ENCODE measurements at regions of chr11 and their contacts with region 1.

Region 1: DNA sequence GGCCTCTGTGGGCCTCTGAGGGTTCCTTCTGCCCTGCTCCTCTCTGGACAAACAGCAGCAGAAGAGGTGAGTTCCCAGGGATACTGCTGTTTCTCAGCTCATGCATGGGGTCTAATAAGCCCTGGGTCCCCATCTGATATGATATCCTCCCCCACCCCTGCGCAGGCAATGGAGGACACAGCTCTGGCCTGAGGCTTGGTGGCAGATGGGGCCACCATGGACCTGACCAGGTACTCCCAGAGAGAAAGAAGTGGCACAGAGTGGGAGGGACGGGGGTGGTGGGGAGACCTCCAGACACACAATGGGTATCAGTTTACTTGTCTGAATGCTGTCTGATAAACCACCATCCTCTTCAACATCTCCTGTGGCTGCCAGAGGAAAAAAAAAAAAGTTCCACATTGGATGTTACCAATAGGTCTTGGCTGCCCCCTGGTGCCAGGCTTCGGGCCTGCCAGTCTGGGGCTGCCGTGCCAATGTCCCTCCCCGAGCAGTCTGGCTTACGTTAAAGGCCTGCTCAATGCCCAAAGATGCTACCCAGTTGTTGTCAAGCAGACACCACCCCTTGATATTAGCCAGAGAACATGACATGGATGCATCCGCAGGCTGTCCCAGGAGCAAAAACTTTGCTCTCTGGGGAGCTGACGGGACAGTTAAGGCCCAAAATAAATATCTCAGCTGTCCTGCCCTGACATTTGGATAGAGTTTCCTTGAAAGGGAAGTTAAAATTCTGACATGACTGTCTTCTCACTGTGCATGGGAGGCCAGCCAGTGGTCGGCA is 27.9 kb upstream of the ABCC8 start:
- DNase-seq: peak; percentile 65 to 83
- ATAC-seq: peak; percentile 77 to 91
- H3K4me3 ChIP-seq: no peak overlapping the region
- H3K27ac ChIP-seq: no peak overlapping the region
- H3K4me1 ChIP-seq: peaks cover 7% of the 10 kb centered on the region; the same call in 2 of the 3 replicates
- CTCF ChIP-seq: peak; percentile 88
- EP300 ChIP-seq: no peak
- POLR2A ChIP-seq: no peak
- RAD21 ChIP-seq: peak; percentile 97 to 98

Region 2: GRCh38 chr11:17230867-17231851 is 273.4 kb before region 1 on chr11:
- CTCF ChIA-PET with region 1: interaction called, 28 read pairs
- POLR2A ChIA-PET with region 1: no interaction called
- DNase-seq: no peak
- ATAC-seq: no peak
- H3K4me3 ChIP-seq: no peak overlapping the region
- H3K27ac ChIP-seq: no peak overlapping the region
- H3K4me1 ChIP-seq: no peaks in the 10 kb centered on the region
- CTCF ChIP-seq: no peak
- EP300 ChIP-seq: no peak
- POLR2A ChIP-seq: no peak
- RAD21 ChIP-seq: no peak

Region 3: DNA sequence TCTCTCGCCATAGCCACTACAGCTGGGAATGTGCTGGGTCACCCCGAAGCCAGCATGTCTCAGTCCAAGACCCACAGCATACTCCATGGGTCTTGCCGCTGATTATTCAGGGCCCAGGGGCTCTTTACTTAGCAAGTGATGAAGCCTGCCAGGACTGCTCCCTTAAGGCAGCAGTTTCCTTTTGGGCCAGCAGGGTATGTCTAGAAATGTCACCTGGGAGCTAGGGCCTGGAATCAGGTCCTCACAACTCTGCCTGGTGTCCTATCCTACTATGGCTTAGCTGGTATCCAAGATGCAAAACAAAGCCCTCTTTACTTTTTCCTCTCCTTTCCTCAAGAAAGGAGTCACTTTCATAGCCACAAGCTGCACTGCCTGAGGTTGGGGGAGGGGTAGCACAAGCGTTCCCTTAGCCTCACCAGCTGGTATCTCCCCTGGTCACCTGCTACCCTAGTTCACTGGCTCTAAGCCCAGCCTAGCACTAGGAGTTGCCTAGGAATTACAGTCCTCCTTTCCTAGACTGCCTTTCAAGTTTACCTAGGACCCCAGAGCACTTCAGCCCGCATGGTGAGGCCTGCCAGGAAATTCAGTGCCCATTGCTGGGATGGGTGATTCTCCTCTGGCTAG is 175.5 kb before region 1 on chr11:
- CTCF ChIA-PET with region 1: no interaction called
- POLR2A ChIA-PET with region 1: no interaction called
- DNase-seq: no peak
- ATAC-seq: peak; percentile 59 to 67; a peak in 3 of 6 replicates
- H3K4me3 ChIP-seq: no peak overlapping the region
- H3K27ac ChIP-seq: no peak overlapping the region
- H3K4me1 ChIP-seq: no peaks in the 10 kb centered on the region
- CTCF ChIP-seq: no peak
- EP300 ChIP-seq: no peak
- POLR2A ChIP-seq: no peak
- RAD21 ChIP-seq: no peak

Region 4: DNA sequence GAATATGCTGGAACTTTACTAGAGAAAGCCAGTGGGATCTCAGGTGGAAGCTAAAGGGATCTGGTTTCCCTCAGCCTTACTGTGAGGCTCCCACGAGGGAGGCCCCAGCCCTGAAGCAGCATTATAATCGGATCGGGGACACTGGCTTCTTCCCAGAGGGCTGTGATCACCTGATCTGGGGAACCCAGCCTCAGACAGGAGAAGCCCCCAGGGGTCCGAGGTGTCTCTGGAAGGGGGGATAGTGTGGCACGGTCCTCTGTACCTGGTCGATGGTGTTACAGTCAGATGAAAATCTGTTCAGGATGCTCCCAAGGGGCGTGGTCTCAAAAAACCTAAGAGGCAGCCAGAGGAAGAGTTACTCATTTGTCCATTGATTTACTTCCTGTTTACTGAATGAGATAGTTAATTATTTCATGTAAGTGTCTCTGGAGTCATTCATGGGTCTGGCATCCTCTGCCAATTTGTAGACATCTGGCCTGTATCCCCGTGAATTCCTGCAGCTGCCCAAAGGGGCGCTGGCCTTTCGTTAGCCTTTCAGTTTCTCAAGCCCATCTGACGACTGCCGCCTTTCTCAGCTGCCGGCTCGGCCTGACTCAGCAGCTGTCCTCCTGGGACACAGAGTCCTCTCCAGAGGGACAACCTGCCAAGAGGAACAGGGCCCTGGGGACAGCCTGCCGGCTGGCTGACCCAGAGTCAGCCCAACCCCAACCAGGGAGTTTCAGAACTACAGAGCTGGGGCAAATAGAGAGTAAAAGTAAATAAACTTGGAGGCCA is 99.1 kb before region 1 on chr11:
- CTCF ChIA-PET with region 1: interaction called, 36 read pairs
- POLR2A ChIA-PET with region 1: no interaction called
- DNase-seq: peak; percentile 47 to 64
- ATAC-seq: peak; percentile 79 to 86
- H3K4me3 ChIP-seq: no peak overlapping the region; the same call in 2 of the 3 replicates
- H3K27ac ChIP-seq: peak overlapping the region; percentile 71 to 85
- H3K4me1 ChIP-seq: peaks cover 13% of the 10 kb centered on the region
- CTCF ChIP-seq: peak; percentile 26; the same call in 1 of the 3 replicates
- EP300 ChIP-seq: no peak
- POLR2A ChIP-seq: no peak
- RAD21 ChIP-seq: no peak

Region 5: GRCh38 chr11:17463531-17464194 is 40.9 kb before region 1 on chr11:
- CTCF ChIA-PET with region 1: interaction called, 11 read pairs
- POLR2A ChIA-PET with region 1: no interaction called
- DNase-seq: no peak
- ATAC-seq: no peak
- H3K4me3 ChIP-seq: no peak overlapping the region
- H3K27ac ChIP-seq: no peak overlapping the region
- H3K4me1 ChIP-seq: no peaks in the 10 kb centered on the region
- CTCF ChIP-seq: no peak
- EP300 ChIP-seq: no peak
- POLR2A ChIP-seq: no peak
- RAD21 ChIP-seq: no peak

Region 6: GRCh38 chr11:17479284-17480214 is 25.0 kb before region 1 on chr11:
- CTCF ChIA-PET with region 1: interaction called, 13 read pairs
- POLR2A ChIA-PET with region 1: no interaction called
- DNase-seq: peak; percentile 24 to 58
- ATAC-seq: peak; percentile 40 to 65; a peak in 4 of 6 replicates
- H3K4me3 ChIP-seq: no peak overlapping the region
- H3K27ac ChIP-seq: no peak overlapping the region
- H3K4me1 ChIP-seq: no peaks in the 10 kb centered on the region
- CTCF ChIP-seq: no peak
- EP300 ChIP-seq: no peak
- POLR2A ChIP-seq: no peak
- RAD21 ChIP-seq: no peak

Region 7: GRCh38 chr11:17528181-17528691 is 23.7 kb after region 1 on chr11:
- CTCF ChIA-PET with region 1: interaction called, 281 read pairs
- POLR2A ChIA-PET with region 1: no interaction called
- DNase-seq: peak; percentile 42 to 88
- ATAC-seq: peak; percentile 89 to 97
- H3K4me3 ChIP-seq: no peak overlapping the region
- H3K27ac ChIP-seq: no peak overlapping the region
- H3K4me1 ChIP-seq: peaks cover 6% of the 10 kb centered on the region; the same call in 2 of the 3 replicates
- CTCF ChIP-seq: peak; percentile 79
- EP300 ChIP-seq: no peak
- POLR2A ChIP-seq: no peak
- RAD21 ChIP-seq: peak; percentile 74 to 77